Common myeloid progenitor, CD34-positive (primary cell): ENCODE measurements at regions of chr17 and their contacts with region 1.

Region 1: GRCh38 chr17:19384701-19385411 is 2.1 kb downstream of the MFAP4 start:
- DNase-seq: peak; percentile 78 to 94 (median 93)
- H3K4me3 ChIP-seq: peak overlapping the region in 2 of 7 experiments; percentile 3 to 16
- H3K27ac ChIP-seq: no peak overlapping the region
- H3K4me1 ChIP-seq: peaks cover 5 to 49% (median 43%) of the 10 kb centered on the region in 4 experiments
- H3K27me3 ChIP-seq: no peaks in the 10 kb centered on the region

Region 2: DNA sequence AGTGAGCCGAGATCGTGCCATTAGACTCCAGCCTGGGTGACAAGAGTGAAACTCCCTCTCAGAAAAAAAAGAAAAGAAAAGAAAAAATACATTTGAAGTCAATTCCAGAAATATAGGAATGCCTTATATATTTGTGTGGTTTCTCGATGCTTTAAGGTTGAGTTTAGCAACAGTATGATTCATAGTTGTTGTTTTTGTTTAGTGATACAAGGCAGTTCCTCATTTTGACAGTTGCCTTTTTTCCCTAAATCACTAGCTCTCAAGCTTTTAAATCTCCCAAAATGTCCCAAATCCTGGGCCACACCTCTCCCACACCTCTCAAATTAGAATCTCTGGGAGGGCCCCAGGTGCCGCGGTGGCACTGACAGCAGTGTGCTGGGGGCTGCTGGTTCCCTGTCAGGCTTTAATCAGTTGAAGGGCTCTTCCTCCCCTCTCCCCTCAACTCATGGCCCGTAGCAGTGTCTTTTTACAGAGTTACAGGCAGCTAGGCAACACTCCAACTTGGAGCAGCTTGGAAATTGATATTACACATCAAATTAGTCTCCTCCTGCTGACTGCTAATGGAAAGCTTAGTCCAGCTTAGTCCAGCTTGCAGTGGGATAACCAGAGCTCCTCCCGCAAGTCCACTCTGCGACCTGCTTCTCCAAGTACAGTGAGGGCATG is 89.3 kb before region 1 on chr17:
- CTCF ChIA-PET with region 1: no interaction called
- POLR2A ChIA-PET with region 1: no interaction called
- DNase-seq: peak in 1 of 3 donors; percentile 23
- H3K4me3 ChIP-seq: no peak overlapping the region
- H3K27ac ChIP-seq: no peak overlapping the region
- H3K4me1 ChIP-seq: peaks cover 0 to 5% (median 3%) of the 10 kb centered on the region in 4 experiments
- H3K27me3 ChIP-seq: peaks cover 0 to 11% (median 3%) of the 10 kb centered on the region in 5 experiments

Region 3: DNA sequence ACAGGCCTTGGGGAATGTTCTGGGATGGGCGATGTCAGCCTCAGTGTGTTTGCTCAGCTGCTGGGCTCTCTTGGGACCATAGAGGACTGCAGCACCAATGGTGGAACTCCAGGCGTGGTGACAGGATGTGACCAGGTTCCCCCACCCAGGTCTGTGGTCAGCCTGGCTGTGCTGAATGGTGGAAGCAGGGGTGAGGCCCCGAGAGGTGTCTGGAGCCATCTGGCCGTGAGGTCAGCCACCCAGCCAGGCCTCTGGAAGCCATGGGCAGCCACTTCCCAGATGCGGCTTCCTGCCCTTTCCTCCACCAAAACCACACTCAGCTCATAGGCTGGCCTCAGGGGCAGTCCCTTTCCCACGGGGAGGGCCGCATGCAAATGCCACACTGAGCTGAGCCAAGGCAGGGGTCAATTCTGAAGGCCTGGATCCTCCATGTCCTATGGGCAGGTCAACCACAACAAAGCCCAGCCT is 14.3 kb before region 1 on chr17:
- CTCF ChIA-PET with region 1: interaction called, 16 read pairs
- POLR2A ChIA-PET with region 1: no interaction called
- DNase-seq: peak; percentile 18 to 72 (median 60)
- H3K4me3 ChIP-seq: peak overlapping the region in 1 of 7 experiments; percentile 17
- H3K27ac ChIP-seq: no peak overlapping the region
- H3K4me1 ChIP-seq: peaks cover 3 to 37% (median 33%) of the 10 kb centered on the region in 4 experiments
- H3K27me3 ChIP-seq: peaks cover 0 to 48% (median 21%) of the 10 kb centered on the region in 5 experiments